Activated B cell treated with CpG ODN at 0.5 μM for 24 hours (primary cell): ENCODE measurements at regions of chr1 and their contacts with region 1.

Region 1: GRCh38 chr1:9413148-9413876 is 120.6 kb downstream of the SPSB1 start:
- DNase-seq: peak; percentile 54
- ATAC-seq: peak; percentile 76
- H3K4me3 Mint-ChIP-seq: peak overlapping the region; percentile 57
- H3K27ac Mint-ChIP-seq: peak overlapping the region; percentile 84
- H3K4me1 Mint-ChIP-seq: peaks cover 57% of the 10 kb centered on the region
- H3K27me3 Mint-ChIP-seq: no peaks in the 10 kb centered on the region
- CTCF ChIP-seq: no peak

Region 2: GRCh38 chr1:9317591-9318417 is 95.5 kb before region 1 on chr1:
- CTCF ChIA-PET with region 1: no interaction called
- POLR2A ChIA-PET with region 1: interaction called, 13 read pairs
- intact Hi-C with region 1: no loop called
- DNase-seq: no peak
- ATAC-seq: no peak
- H3K4me3 Mint-ChIP-seq: no peak overlapping the region
- H3K27ac Mint-ChIP-seq: no peak overlapping the region
- H3K4me1 Mint-ChIP-seq: peaks cover 31% of the 10 kb centered on the region
- H3K27me3 Mint-ChIP-seq: no peaks in the 10 kb centered on the region
- CTCF ChIP-seq: no peak

Region 3: DNA sequence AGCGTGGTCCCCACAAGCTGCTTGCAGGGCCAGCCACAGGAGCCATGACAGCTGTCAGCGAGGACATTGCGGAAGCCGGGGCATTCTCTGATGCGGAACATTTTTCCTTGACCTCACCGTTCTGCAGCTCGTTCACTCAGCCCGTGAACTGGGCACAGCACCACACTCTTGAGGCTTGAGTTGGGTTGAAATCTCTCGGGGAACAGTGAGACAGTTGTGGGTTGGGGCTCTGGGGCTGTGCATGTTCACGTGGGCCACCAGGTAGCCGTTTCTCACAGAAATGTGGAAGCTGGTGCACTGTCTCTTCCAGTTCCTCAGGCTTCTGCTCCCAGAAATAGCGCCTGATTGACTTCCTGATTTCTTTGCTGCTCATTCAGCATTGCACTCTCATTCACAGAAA is 50.8 kb before region 1 on chr1:
- CTCF ChIA-PET with region 1: no interaction called
- POLR2A ChIA-PET with region 1: interaction called, 4 read pairs
- intact Hi-C with region 1: loop called (anchors 5 kb)
- DNase-seq: peak; percentile 25
- ATAC-seq: peak; percentile 68
- H3K4me3 Mint-ChIP-seq: peak overlapping the region; percentile 78
- H3K27ac Mint-ChIP-seq: no peak overlapping the region
- H3K4me1 Mint-ChIP-seq: peaks cover 22% of the 10 kb centered on the region
- H3K27me3 Mint-ChIP-seq: no peaks in the 10 kb centered on the region
- CTCF ChIP-seq: no peak

Region 4: GRCh38 chr1:9455487-9456234 is 42.3 kb after region 1 on chr1:
- CTCF ChIA-PET with region 1: interaction called, 6 read pairs
- POLR2A ChIA-PET with region 1: no interaction called
- intact Hi-C with region 1: loop called (anchors 5 kb)
- DNase-seq: peak; percentile 57
- ATAC-seq: peak; percentile 79
- H3K4me3 Mint-ChIP-seq: no peak overlapping the region
- H3K27ac Mint-ChIP-seq: no peak overlapping the region
- H3K4me1 Mint-ChIP-seq: peaks cover 2% of the 10 kb centered on the region
- H3K27me3 Mint-ChIP-seq: peaks cover 3% of the 10 kb centered on the region
- CTCF ChIP-seq: no peak

Region 5: DNA sequence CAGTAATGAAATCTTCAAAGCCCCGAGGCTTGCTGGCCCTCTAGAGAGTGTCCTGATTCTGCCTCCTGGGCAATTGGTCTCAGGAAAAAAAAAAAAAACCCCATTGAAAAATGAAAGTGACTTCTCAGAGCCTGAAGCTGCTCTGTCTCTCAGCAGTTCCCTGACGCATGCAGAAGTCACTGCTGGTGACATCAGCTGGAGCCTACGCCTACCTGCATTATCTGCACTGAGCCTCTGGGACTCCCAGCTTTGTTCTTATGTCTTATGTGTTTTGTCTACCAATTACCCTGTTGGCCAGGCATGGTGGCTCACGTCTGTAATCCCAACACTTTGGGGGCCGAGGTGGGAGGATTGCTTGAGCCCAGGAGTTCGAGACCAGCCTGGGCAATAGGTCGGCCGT is 115.9 kb after region 1 on chr1:
- CTCF ChIA-PET with region 1: no interaction called
- POLR2A ChIA-PET with region 1: no interaction called
- intact Hi-C with region 1: no loop called
- DNase-seq: no peak
- ATAC-seq: no peak
- H3K4me3 Mint-ChIP-seq: no peak overlapping the region
- H3K27ac Mint-ChIP-seq: no peak overlapping the region
- H3K4me1 Mint-ChIP-seq: peaks cover 10% of the 10 kb centered on the region
- H3K27me3 Mint-ChIP-seq: no peaks in the 10 kb centered on the region
- CTCF ChIP-seq: no peak